ENCODE measurements at regions of chr20 and their contacts with region 1.

Region 1: GRCh38 chr20:3828798-3829197 is 8.5 kb downstream of the AP5S1 start:
- DNase-seq: no peak
- ATAC-seq: no peak
- H3K4me3 ChIP-seq: no peak overlapping the region
- H3K4me3 Mint-ChIP-seq: no peak overlapping the region
- H3K27ac ChIP-seq: no peak overlapping the region
- H3K27ac Mint-ChIP-seq: no peak overlapping the region
- H3K4me1 ChIP-seq: no peaks in the 10 kb centered on the region
- H3K4me1 Mint-ChIP-seq: peaks cover 0 to 4% (median 0%) of the 10 kb centered on the region in 7 donors
- H3K27me3 ChIP-seq: no peaks in the 10 kb centered on the region
- H3K27me3 Mint-ChIP-seq: no peaks in the 10 kb centered on the region

Region 2: DNA sequence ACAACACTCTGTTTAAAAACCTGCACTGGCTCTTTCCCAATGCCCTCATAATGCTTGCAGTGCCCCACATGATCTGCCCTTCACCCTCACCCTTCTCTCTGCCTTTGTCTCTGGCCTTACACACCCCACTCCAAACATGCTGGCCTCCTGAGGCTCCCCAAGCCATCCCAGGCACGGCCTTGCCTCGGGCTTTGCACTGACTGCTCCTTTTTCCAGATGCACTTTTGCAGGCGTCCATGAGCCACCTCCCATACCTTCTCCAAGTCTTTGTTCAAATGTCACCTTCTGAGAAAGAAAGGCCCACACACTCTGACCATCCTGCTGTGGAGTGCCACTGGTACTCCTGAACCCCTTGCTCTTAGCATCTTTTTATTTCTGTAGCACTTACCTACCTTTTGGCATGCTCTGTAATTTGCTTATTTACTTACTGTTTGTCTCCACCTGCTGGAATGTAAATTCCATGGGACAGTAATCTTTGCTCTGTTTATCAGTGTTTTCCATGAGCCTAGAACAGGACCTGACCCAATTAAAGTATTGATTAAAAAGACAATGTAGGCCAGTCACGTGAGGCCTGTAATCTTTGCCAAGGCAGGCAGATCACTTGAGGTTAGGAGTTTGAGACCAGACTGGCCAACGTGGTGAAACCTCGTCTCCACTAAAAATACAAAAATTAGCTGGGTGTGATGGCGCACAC is 196.3 kb before region 1 on chr20:
- CTCF ChIA-PET with region 1: no interaction called
- POLR2A ChIA-PET with region 1: no interaction called
- intact Hi-C with region 1: no loop called
- DNase-seq: no peak
- ATAC-seq: no peak
- H3K4me3 ChIP-seq: no peak overlapping the region
- H3K4me3 Mint-ChIP-seq: no peak overlapping the region
- H3K27ac ChIP-seq: no peak overlapping the region
- H3K27ac Mint-ChIP-seq: peak overlapping the region in 1 of 9 donors; percentile 64
- H3K4me1 ChIP-seq: no peaks in the 10 kb centered on the region
- H3K4me1 Mint-ChIP-seq: peaks cover 0 to 5% (median 0%) of the 10 kb centered on the region in 7 donors
- H3K27me3 ChIP-seq: no peaks in the 10 kb centered on the region
- H3K27me3 Mint-ChIP-seq: no peaks in the 10 kb centered on the region

Region 3: DNA sequence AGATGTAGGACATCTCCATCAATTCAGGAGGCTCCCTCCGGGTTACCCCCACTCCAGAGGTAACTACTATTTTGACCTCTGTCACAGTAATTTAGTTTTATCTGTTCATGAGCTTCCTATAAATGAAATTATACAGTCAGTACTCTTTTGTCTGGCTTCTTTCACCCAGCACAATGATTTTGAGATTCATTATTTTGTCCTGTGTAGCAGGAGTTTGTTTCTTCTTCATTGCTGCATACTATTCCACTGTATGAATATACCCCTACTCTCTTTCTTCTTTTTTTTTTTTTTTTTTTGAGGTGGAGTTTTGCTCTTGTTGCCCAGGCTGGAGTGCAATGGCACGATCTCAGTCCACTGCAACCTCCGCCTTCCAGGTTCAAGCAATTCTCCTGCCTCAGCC is 20.3 kb before region 1 on chr20:
- CTCF ChIA-PET with region 1: no interaction called
- POLR2A ChIA-PET with region 1: no interaction called
- intact Hi-C with region 1: no loop called
- DNase-seq: no peak
- ATAC-seq: no peak
- H3K4me3 ChIP-seq: no peak overlapping the region
- H3K4me3 Mint-ChIP-seq: peak overlapping the region in 4 of 10 donors; percentile 16 to 58 (median 50)
- H3K27ac ChIP-seq: no peak overlapping the region
- H3K27ac Mint-ChIP-seq: peak overlapping the region in 7 of 9 donors; percentile 41 to 91 (median 63)
- H3K4me1 ChIP-seq: peaks cover 46 to 48% of the 10 kb centered on the region in 2 donors
- H3K4me1 Mint-ChIP-seq: peaks cover 59 to 83% (median 67%) of the 10 kb centered on the region in 7 donors
- H3K27me3 ChIP-seq: no peaks in the 10 kb centered on the region
- H3K27me3 Mint-ChIP-seq: no peaks in the 10 kb centered on the region

Region 4: GRCh38 chr20:3846740-3847428 is 18.1 kb after region 1 on chr20 and contains the start of gene MAVS:
- CTCF ChIA-PET with region 1: no interaction called
- POLR2A ChIA-PET with region 1: interaction called, 4 read pairs
- intact Hi-C with region 1: loop called in 1 of 2 experiments (anchors 1 kb)
- DNase-seq: peak; percentile 76 to 93 (median 82)
- ATAC-seq: peak; percentile 100
- H3K4me3 ChIP-seq: peak within 1 kb of the TSS; percentile 86
- H3K4me3 Mint-ChIP-seq: peak within 1 kb of the TSS; percentile 85 to 93 (median 90)
- H3K27ac ChIP-seq: peak within 1 kb of the TSS; percentile 96
- H3K27ac Mint-ChIP-seq: peak within 1 kb of the TSS; percentile 59 to 95 (median 90)
- H3K4me1 ChIP-seq: peaks cover 0 to 10% of the 10 kb centered on the region in 2 donors
- H3K4me1 Mint-ChIP-seq: peaks cover 16 to 30% (median 27%) of the 10 kb centered on the region in 7 donors
- H3K27me3 ChIP-seq: no peaks in the 10 kb centered on the region
- H3K27me3 Mint-ChIP-seq: no peaks in the 10 kb centered on the region
- total RNA-seq, gene MAVS: 23.3 to 49.9 (median 41.5) TPM

Region 5: DNA sequence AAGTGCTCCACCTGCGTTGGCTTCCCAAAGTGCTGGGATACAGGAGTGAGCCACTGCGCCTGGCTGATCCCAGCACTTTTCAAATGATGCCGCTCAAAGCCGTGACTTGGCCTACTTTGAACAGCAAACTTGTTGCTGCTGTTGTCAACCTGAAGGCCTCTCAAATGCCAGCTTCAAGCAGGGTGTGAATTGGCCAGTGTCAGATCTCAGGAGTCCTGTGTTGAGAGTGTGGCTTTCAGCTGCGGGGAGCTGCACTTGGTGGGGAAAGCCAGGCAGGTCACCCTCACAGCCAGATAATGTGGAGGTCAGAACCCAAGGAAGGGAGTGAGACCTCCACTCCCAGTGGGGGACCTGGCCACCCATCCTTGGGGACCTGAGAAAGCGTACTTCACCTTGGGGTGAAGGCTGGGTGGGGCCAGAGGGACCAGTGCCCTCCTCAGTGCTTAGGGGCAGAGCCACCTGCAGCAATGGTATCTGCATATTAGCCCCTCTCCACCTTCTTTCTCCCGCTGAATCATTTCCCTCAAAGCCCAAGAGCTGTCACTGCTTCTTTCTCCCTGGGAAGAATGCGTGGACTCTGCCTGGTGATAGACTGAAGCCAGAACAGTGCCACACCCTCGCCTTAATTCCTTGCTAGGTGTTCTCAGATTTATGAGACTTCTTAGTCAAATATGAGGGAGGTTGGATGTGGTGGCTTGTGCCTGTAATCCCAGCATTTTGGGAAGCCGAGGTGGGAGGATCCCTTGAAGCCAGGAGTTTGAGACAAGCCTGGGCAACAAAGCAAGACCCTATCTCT is 41.2 kb after region 1 on chr20:
- CTCF ChIA-PET with region 1: no interaction called
- POLR2A ChIA-PET with region 1: no interaction called
- intact Hi-C with region 1: no loop called
- DNase-seq: no peak
- ATAC-seq: no peak
- H3K4me3 ChIP-seq: no peak overlapping the region
- H3K4me3 Mint-ChIP-seq: no peak overlapping the region
- H3K27ac ChIP-seq: peak overlapping the region; percentile 13
- H3K27ac Mint-ChIP-seq: peak overlapping the region in 3 of 9 donors; percentile 22 to 77 (median 31)
- H3K4me1 ChIP-seq: no peaks in the 10 kb centered on the region
- H3K4me1 Mint-ChIP-seq: peaks cover 8 to 21% (median 17%) of the 10 kb centered on the region in 7 donors
- H3K27me3 ChIP-seq: no peaks in the 10 kb centered on the region
- H3K27me3 Mint-ChIP-seq: no peaks in the 10 kb centered on the region

Measured in naive thymus-derived CD4-positive, alpha-beta T cell (primary cell).